ENCODE measurements at regions of chr16 and their contacts with region 1.

Region 1: GRCh38 chr16:17404941-17405689 is 65.6 kb downstream of the XYLT1 start:
- DNase-seq: peak; percentile 93 to 99
- H3K4me3 ChIP-seq: peak overlapping the region in 1 of 2 donors; percentile 38
- H3K27ac ChIP-seq: peak overlapping the region; percentile 94 to 95
- H3K4me1 ChIP-seq: peaks cover 0 to 52% (median 32%) of the 10 kb centered on the region in 4 donors
- H3K27me3 ChIP-seq: no peaks in the 10 kb centered on the region
- CTCF ChIP-seq: peak in 1 of 2 experiments; percentile 6

Region 2: GRCh38 chr16:17470936-17471718 is 66.0 kb after region 1 on chr16 and contains the start of gene XYLT1:
- intact Hi-C with region 1: loop called (anchors 5 kb)
- DNase-seq: peak; percentile 94 to 96
- H3K4me3 ChIP-seq: peak within 1 kb of the TSS; percentile 69 to 85
- H3K27ac ChIP-seq: peak within 1 kb of the TSS; percentile 99 to 100
- H3K4me1 ChIP-seq: peaks cover 0 to 46% (median 33%) of the 10 kb centered on the region in 4 donors
- H3K27me3 ChIP-seq: no peaks in the 10 kb centered on the region
- CTCF ChIP-seq: no peak

Measured in tibial artery (tissue), 4 donors.